Mammary epithelial cell (primary cell): ENCODE measurements at regions of chr5 and their contacts with region 1.

Region 1: DNA sequence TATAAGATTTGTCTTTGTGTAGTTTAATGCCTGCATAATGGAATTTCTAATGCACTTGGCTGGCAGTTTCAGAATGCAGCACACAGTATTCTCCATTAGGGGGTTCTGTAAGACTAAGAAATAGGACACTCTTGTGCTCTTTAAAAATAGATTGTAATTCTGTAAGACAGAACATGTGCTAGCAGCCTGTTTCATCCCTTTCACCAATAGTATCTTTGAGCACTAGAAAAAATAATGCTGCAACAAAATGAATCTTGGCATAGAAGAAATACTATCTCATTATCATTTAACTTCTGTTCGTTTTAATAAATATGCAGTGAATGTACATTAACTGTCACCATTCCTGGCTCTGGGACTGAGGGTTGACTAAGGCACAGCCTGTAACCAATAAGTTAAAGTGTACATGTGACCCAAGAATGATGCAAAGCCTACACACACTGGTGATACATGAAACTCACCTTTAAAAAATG is 23.8 kb upstream of the ZNF622 start:
- DNase-seq: peak; percentile 52
- H3K4me3 ChIP-seq: no peak overlapping the region
- H3K27ac ChIP-seq: peak overlapping the region; percentile 38
- H3K4me1 ChIP-seq: peaks cover 23% of the 10 kb centered on the region
- H3K27me3 ChIP-seq: no peaks in the 10 kb centered on the region
- CTCF ChIP-seq: peak; percentile 69 to 75

Region 2: GRCh38 chr5:16465544-16466466 is 23.6 kb before region 1 on chr5 and contains the start of gene ZNF622:
- CTCF ChIA-PET with region 1: no interaction called
- dilution Hi-C with region 1: no loop called
- in situ Hi-C with region 1: no loop called
- intact Hi-C with region 1: loop called (anchors 2 kb)
- DNase-seq: peak; percentile 89
- H3K4me3 ChIP-seq: peak within 1 kb of the TSS; percentile 78 to 98 (median 87)
- H3K27ac ChIP-seq: peak within 1 kb of the TSS; percentile 83
- H3K4me1 ChIP-seq: peaks cover 33% of the 10 kb centered on the region
- H3K27me3 ChIP-seq: no peaks in the 10 kb centered on the region
- CTCF ChIP-seq: no peak
- total RNA-seq, gene ZNF622: 32.2 to 32.3 TPM

Region 3: GRCh38 chr5:16508730-16509531 is 19.6 kb after region 1 on chr5:
- CTCF ChIA-PET with region 1: no interaction called
- dilution Hi-C with region 1: no loop called
- in situ Hi-C with region 1: no loop called
- intact Hi-C with region 1: loop called (anchors 1 kb)
- DNase-seq: peak; percentile 89
- H3K4me3 ChIP-seq: peak overlapping the region; percentile 47 to 72 (median 51)
- H3K27ac ChIP-seq: peak overlapping the region; percentile 70
- H3K4me1 ChIP-seq: peaks cover 16% of the 10 kb centered on the region
- H3K27me3 ChIP-seq: no peaks in the 10 kb centered on the region
- CTCF ChIP-seq: no peak

Region 4: DNA sequence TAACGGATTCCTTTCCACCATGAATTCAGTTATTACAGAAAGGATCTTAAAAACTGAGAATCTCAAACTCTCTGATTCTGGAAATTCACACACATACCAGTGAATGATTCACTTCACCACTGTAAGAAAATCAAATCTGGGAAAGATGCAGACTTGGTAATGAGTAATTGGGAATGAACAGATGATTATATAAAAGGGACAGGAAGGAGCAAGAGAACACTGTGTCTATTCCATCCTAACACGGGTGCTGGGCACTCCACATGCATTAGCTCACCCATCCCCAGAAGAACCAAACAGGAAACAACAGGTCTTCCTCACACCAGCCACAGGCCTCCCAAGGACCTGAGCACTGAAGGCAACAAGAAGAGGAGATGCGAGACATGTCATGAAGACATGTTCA is 51.1 kb after region 1 on chr5:
- CTCF ChIA-PET with region 1: no interaction called
- dilution Hi-C with region 1: no loop called
- in situ Hi-C with region 1: loop called in 1 of 2 experiments (anchors 5 kb)
- intact Hi-C with region 1: loop called (anchors 2 kb)
- DNase-seq: peak; percentile 83
- H3K4me3 ChIP-seq: no peak overlapping the region
- H3K27ac ChIP-seq: peak overlapping the region; percentile 66
- H3K4me1 ChIP-seq: peaks cover 25% of the 10 kb centered on the region
- H3K27me3 ChIP-seq: no peaks in the 10 kb centered on the region
- CTCF ChIP-seq: no peak

Region 5: GRCh38 chr5:16585041-16585667 is 95.8 kb after region 1 on chr5:
- CTCF ChIA-PET with region 1: no interaction called
- dilution Hi-C with region 1: no loop called
- in situ Hi-C with region 1: no loop called
- intact Hi-C with region 1: loop called (anchors 1 kb)
- DNase-seq: no peak
- H3K4me3 ChIP-seq: no peak overlapping the region
- H3K27ac ChIP-seq: no peak overlapping the region
- H3K4me1 ChIP-seq: peaks cover 6% of the 10 kb centered on the region
- H3K27me3 ChIP-seq: no peaks in the 10 kb centered on the region
- CTCF ChIP-seq: peak; percentile 66 to 72

Region 6: DNA sequence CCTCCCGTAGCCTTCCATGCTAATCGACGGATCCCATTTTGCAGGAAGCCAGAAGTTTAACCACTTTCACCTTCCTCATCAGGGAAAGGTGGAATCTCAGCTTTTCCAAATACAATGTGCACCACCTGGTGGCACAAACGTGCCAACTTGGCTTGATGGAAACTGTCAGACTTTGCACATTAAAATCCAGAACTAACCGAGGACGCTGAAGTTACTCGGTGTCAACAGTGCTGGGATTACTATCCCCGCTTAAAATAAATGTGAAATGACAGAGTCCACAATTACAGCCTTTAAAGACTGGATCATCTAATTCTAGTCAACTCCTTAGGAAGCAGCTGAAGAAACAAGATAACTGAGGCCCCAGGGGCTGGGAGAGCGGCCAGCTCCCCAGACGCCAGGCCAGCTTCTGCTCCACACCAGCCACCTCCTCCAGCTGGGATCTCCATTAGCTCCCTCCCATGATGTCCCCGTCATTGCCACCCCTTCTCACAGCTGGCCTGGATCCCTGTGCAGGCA is 177.6 kb after region 1 on chr5:
- CTCF ChIA-PET with region 1: no interaction called
- dilution Hi-C with region 1: no loop called
- in situ Hi-C with region 1: no loop called
- intact Hi-C with region 1: loop called (anchors 1 kb)
- DNase-seq: no peak
- H3K4me3 ChIP-seq: no peak overlapping the region
- H3K27ac ChIP-seq: no peak overlapping the region
- H3K4me1 ChIP-seq: no peaks in the 10 kb centered on the region
- H3K27me3 ChIP-seq: no peaks in the 10 kb centered on the region
- CTCF ChIP-seq: peak; percentile 45 to 63

Region 7: GRCh38 chr5:17204133-17204489 is 714.8 kb after region 1 on chr5:
- CTCF ChIA-PET with region 1: no interaction called
- dilution Hi-C with region 1: no loop called
- in situ Hi-C with region 1: loop called in 1 of 2 experiments (anchors 25 kb)
- intact Hi-C with region 1: loop called (anchors 1 kb)
- DNase-seq: no peak
- H3K4me3 ChIP-seq: no peak overlapping the region
- H3K27ac ChIP-seq: no peak overlapping the region
- H3K4me1 ChIP-seq: peaks cover 9% of the 10 kb centered on the region
- H3K27me3 ChIP-seq: peaks cover 2% of the 10 kb centered on the region
- CTCF ChIP-seq: no peak